Naive thymus-derived CD4-positive, alpha-beta T cell (primary cell): ENCODE measurements at regions of chr1 and their contacts with region 1.

Region 1: GRCh38 chr1:187744665-187745064 is 915.9 kb downstream of the PLA2G4A start:
- DNase-seq: no peak
- ATAC-seq: no peak
- H3K4me3 ChIP-seq: no peak overlapping the region
- H3K4me3 Mint-ChIP-seq: no peak overlapping the region
- H3K27ac ChIP-seq: no peak overlapping the region
- H3K27ac Mint-ChIP-seq: no peak overlapping the region
- H3K4me1 ChIP-seq: no peaks in the 10 kb centered on the region
- H3K4me1 Mint-ChIP-seq: no peaks in the 10 kb centered on the region
- H3K27me3 ChIP-seq: no peaks in the 10 kb centered on the region
- H3K27me3 Mint-ChIP-seq: no peaks in the 10 kb centered on the region

Region 2: GRCh38 chr1:187755536-187755935 is 10.9 kb after region 1 on chr1:
- CTCF ChIA-PET with region 1: no interaction called
- POLR2A ChIA-PET with region 1: no interaction called
- intact Hi-C with region 1: loop called in 1 of 2 experiments (anchors 1 kb)
- DNase-seq: no peak
- ATAC-seq: no peak
- H3K4me3 ChIP-seq: no peak overlapping the region
- H3K4me3 Mint-ChIP-seq: no peak overlapping the region
- H3K27ac ChIP-seq: no peak overlapping the region
- H3K27ac Mint-ChIP-seq: no peak overlapping the region
- H3K4me1 ChIP-seq: no peaks in the 10 kb centered on the region
- H3K4me1 Mint-ChIP-seq: no peaks in the 10 kb centered on the region
- H3K27me3 ChIP-seq: no peaks in the 10 kb centered on the region
- H3K27me3 Mint-ChIP-seq: no peaks in the 10 kb centered on the region

Region 3: DNA sequence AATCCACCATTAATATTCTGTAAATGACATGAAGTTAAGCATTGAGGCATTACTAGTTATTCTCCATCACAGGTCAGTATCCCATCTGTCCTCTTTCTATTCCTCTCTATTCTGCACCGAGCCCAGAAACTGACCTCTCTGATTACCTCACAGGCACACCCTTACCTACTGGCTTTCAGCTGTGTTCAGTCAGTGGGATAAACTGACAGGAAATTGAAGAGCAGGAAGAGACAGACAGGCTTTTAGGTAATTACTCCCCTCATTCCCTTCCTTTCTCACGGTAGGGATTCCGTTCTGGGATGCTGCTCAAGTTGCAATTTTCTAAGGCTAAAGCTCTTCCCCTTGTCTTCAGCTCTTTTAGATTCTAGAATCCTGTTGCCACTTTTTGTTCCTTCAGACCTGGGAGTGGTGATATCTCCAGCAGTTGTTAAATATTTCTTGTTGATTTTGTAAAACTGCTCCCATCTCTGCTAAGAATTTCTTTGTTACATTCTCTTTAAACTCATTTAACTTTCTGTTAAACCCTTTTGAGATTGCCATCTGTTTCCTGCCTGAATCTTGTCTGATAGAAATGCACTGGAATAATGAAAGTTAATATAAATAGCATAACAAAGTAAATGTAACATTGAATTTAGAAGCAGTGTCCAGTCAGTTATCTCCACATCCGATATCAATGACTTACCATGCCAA is 147.5 kb after region 1 on chr1:
- CTCF ChIA-PET with region 1: no interaction called
- POLR2A ChIA-PET with region 1: no interaction called
- intact Hi-C with region 1: no loop called
- DNase-seq: no peak
- ATAC-seq: no peak
- H3K4me3 ChIP-seq: no peak overlapping the region
- H3K4me3 Mint-ChIP-seq: no peak overlapping the region
- H3K27ac ChIP-seq: no peak overlapping the region
- H3K27ac Mint-ChIP-seq: no peak overlapping the region
- H3K4me1 ChIP-seq: no peaks in the 10 kb centered on the region
- H3K4me1 Mint-ChIP-seq: no peaks in the 10 kb centered on the region
- H3K27me3 ChIP-seq: no peaks in the 10 kb centered on the region
- H3K27me3 Mint-ChIP-seq: no peaks in the 10 kb centered on the region